ENCODE measurements at regions of chr12 and their contacts with region 1.

Region 1: DNA sequence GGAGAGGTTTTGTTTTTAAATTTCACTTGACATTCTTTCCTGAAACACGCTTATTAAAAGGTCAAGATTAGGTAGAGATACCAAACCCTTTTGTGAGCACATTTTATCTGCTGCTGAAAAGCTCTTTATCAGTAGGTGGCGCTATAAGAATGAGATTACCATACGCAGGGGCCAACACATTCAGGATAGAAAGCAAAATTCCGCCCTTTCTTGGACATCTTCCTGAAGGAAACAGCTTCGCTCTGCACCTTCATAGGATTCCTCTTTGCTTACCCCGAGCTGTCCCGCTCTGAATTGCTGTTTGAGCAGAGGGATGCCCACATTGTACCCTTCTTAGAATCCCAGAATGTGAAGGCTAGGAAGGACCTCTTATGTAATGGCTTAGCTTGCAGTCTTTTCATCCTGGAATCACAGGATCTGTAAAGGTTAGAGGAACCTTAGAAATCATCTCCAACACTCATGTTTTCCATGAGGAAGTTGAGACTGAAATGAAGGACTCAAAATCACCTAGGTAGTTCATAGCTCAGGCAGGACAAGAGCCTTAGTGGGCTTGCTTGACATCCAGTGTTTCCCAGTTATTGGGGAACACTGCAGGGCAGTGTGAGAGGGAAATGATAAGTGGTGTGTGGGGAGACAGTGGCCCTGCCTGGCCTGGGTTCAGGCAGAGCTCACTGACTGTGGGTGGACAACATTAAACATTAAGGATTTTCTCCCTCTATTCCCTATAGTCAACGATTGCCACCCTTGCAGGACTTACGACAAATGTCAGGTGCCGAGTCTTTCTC is 38.7 kb upstream of the CRY1 start:
- DNase-seq: peak in 6 of 7 donors; percentile 16 to 52 (median 28)
- H3K4me3 ChIP-seq: no peak overlapping the region
- H3K27ac ChIP-seq: no peak overlapping the region
- H3K4me1 ChIP-seq: no peaks in the 10 kb centered on the region
- H3K27me3 ChIP-seq: no peaks in the 10 kb centered on the region
- CTCF ChIP-seq: peak; percentile 44 to 86 (median 82)
- POLR2A ChIP-seq: no peak

Region 2: GRCh38 chr12:107057071-107057818 is 74.8 kb before region 1 on chr12:
- intact Hi-C with region 1: no loop called
- DNase-seq: no peak
- H3K4me3 ChIP-seq: no peak overlapping the region
- H3K27ac ChIP-seq: peak overlapping the region in 1 of 5 donors; percentile 8
- H3K4me1 ChIP-seq: peaks cover 6 to 35% of the 10 kb centered on the region in 2 donors
- H3K27me3 ChIP-seq: no peaks in the 10 kb centered on the region
- CTCF ChIP-seq: no peak
- POLR2A ChIP-seq: no peak

Region 3: DNA sequence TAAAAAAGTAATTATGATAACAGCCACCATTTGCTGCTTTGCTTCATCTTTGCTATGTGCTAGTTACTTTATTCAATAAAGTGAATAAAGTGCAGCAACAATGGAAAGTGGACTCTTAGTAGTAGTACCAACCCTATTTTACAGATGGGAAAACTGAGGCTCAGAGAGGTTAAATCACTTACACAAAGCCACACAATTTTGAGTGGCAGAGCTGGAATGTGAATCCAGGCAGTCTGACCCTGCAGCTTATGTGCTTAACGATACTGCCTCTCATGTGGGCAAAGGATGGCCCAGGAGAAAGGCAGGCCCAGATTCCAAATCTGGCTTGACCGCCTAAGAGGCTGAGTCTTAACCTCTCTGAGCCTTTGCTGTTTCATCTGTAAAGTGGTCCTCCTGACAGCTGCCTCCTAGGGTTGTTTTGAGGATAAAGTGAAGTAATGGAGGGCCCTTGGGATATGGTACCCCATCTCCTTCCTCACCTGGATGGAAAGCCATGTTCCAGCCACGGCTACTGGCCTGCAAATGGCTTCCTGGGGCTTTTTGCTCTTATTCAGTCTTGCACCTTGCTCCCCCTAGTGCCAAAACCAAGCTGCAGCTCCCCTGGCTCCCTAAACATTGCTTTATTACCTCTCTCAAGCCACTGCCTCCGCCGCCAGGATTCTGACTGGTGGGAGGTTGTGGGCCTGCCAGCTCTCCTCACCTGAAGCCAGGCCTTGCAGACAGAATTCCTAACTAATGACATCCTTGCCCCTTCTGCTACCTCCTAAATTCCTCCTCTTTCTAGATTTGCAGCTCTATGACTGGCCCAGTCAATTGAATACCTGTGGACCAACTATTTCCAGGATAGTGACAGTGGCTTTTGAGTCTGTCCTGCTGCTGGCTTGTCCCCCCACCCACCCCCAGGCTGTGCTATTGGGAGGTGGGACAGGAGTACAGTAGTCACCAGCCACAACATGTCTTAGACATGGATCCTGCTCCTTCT is 270.3 kb after region 1 on chr12:
- intact Hi-C with region 1: loop called (anchors 5 kb)
- DNase-seq: peak; percentile 42 to 80 (median 66)
- H3K4me3 ChIP-seq: no peak overlapping the region
- H3K27ac ChIP-seq: no peak overlapping the region
- H3K4me1 ChIP-seq: no peaks in the 10 kb centered on the region
- H3K27me3 ChIP-seq: no peaks in the 10 kb centered on the region
- CTCF ChIP-seq: peak; percentile 45 to 59 (median 54)
- POLR2A ChIP-seq: no peak

Region 4: GRCh38 chr12:107783406-107784376 is 651.7 kb after region 1 on chr12:
- intact Hi-C with region 1: no loop called
- DNase-seq: no peak
- H3K4me3 ChIP-seq: no peak overlapping the region
- H3K27ac ChIP-seq: no peak overlapping the region
- H3K4me1 ChIP-seq: no peaks in the 10 kb centered on the region
- H3K27me3 ChIP-seq: no peaks in the 10 kb centered on the region
- CTCF ChIP-seq: no peak
- POLR2A ChIP-seq: no peak